ENCODE measurements at regions of chr10 and their contacts with region 1.

Region 1: GRCh38 chr10:122648599-122649428 is 50.8 kb downstream of the C10orf120 start:
- DNase-seq: peak; percentile 29 to 61
- ATAC-seq: peak in 1 of 4 donors; percentile 40
- H3K4me3 ChIP-seq: no peak overlapping the region
- H3K27ac ChIP-seq: no peak overlapping the region
- H3K4me1 ChIP-seq: no peaks in the 10 kb centered on the region
- H3K27me3 ChIP-seq: peaks cover 0 to 11% (median 0%) of the 10 kb centered on the region in 3 donors
- CTCF ChIP-seq: peak; percentile 47

Region 2: GRCh38 chr10:121696854-121697253 is 952.0 kb before region 1 on chr10:
- intact Hi-C with region 1: no loop called
- DNase-seq: no peak
- ATAC-seq: no peak
- H3K4me3 ChIP-seq: no peak overlapping the region
- H3K27ac ChIP-seq: no peak overlapping the region
- H3K4me1 ChIP-seq: no peaks in the 10 kb centered on the region
- H3K27me3 ChIP-seq: peaks cover 0 to 16% (median 3%) of the 10 kb centered on the region in 3 donors
- CTCF ChIP-seq: no peak

Region 3: GRCh38 chr10:122703439-122704118 is 54.8 kb after region 1 on chr10:
- intact Hi-C with region 1: loop called in 1 of 2 experiments (anchors 2 kb)
- DNase-seq: peak; percentile 47 to 82
- ATAC-seq: peak; percentile 83 to 89 (median 86)
- H3K4me3 ChIP-seq: no peak overlapping the region
- H3K27ac ChIP-seq: no peak overlapping the region
- H3K4me1 ChIP-seq: no peaks in the 10 kb centered on the region
- H3K27me3 ChIP-seq: peaks cover 0 to 4% (median 0%) of the 10 kb centered on the region in 3 donors
- CTCF ChIP-seq: peak; percentile 85